Activated CD8-positive, alpha-beta T cell treated with anti-CD3 and anti-CD28 coated beads, Interleukin-2, amount 10 ng/mL, durations not matched to agents 7 days and 5 days (primary cell): ENCODE measurements at regions of chr17 and their contacts with region 1.

Region 1: DNA sequence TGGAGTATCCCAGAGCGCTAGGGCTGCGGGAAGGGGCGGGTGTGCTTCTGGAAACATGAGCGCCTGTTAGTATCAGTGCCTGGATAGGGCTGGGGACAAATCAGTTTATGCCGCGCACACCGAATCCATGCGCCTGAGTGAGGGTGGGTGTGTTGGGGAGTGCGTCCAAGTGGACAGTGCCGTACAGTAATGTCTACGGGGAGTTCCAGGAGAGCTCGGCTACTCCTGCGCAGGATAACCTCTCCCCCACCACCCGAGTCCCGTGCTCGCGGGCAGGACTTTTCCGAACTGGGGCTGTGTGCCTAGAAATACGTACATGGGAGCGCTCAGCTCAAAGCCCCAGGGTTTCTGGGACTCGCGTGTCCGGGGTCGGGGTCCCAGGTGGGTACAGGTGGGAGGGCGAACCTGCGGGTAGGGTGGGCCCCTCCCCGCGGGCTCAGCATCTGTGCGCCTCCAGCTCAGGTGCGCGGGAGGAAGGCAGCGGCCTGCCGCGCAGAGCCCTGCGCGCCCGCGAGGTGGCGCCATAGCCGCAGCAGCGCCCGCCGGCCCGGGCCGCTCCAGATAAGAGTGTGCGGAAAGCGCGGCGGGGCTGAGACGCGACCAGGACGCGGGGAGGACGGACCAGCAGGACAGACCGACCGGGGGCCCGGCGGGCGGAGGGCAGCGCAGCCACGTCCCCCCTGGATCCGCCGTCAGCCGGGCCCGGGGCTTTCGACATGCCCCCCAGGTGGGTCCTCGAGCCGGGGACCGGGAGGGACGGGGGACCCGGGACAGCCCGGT is at the start of gene HIC1:
- DNase-seq: peak; percentile 85
- ATAC-seq: peak; percentile 54
- H3K4me3 Mint-ChIP-seq: peak within 1 kb of the TSS; percentile 78
- H3K27ac Mint-ChIP-seq: peak within 1 kb of the TSS; percentile 82
- H3K4me1 Mint-ChIP-seq: peaks cover 27% of the 10 kb centered on the region
- H3K27me3 Mint-ChIP-seq: peaks cover 14% of the 10 kb centered on the region
- total RNA-seq, gene HIC1: 66.8 to 70.8 TPM

Region 2: DNA sequence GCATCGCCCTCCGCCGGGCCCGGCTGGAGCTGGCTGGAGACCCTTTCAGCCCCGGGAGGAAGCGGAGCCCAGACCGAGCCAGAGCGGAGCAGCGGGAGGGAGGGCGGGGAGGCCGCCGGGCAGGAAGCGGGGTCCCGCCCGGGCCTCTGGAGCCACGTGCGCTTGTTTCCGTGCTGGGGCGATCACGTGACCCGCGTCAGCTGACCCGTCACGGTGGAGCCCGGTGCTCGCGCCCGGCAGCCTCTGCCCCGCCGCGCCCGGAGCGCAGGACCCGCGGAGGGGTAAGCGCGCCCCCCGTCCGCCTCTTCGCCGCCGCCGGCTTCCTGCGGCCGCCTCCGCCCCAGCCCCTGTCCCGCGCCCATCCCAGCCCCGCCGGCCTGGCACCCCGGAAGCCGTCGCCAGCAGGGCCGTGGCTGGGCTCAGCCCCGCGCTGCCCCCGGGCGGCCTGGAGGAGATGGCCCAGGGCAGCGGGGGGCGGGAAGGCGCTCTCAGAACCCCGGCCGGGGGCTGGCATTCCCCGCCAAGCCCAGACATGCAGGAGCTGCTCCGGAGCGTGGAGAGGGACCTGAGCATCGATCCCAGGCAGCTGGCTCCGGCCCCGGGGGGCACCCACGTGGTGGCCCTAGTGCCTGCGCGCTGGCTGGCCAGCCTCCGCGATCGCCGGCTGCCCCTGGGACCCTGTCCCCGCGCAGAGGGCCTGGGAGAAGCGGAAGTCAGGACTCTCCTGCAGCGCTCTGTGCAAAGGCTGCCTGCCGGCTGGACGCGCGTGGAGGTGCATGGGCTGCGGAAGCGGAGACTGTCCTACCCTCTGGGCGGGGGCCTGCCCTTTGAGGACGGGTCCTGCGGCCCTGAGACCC is 330.0 kb before region 1 on chr17 and contains the start of gene WDR81:
- CTCF ChIA-PET with region 1: interaction called, 12 read pairs
- POLR2A ChIA-PET with region 1: no interaction called
- DNase-seq: peak; percentile 94
- ATAC-seq: peak; percentile 79
- H3K4me3 Mint-ChIP-seq: peak within 1 kb of the TSS; percentile 77
- H3K27ac Mint-ChIP-seq: peak within 1 kb of the TSS; percentile 82
- H3K4me1 Mint-ChIP-seq: peaks cover 46% of the 10 kb centered on the region
- H3K27me3 Mint-ChIP-seq: no peaks in the 10 kb centered on the region
- total RNA-seq, gene WDR81: 29.4 to 30.8 TPM

Region 3: GRCh38 chr17:2070241-2071023 is 15.7 kb after region 1 on chr17:
- CTCF ChIA-PET with region 1: interaction called, 26 read pairs
- POLR2A ChIA-PET with region 1: interaction called, 7 read pairs
- DNase-seq: peak; percentile 78
- ATAC-seq: peak; percentile 82
- H3K4me3 Mint-ChIP-seq: peak overlapping the region; percentile 16
- H3K27ac Mint-ChIP-seq: peak overlapping the region; percentile 84
- H3K4me1 Mint-ChIP-seq: peaks cover 67% of the 10 kb centered on the region
- H3K27me3 Mint-ChIP-seq: no peaks in the 10 kb centered on the region

Region 4: GRCh38 chr17:2176499-2177169 is 121.9 kb after region 1 on chr17:
- CTCF ChIA-PET with region 1: no interaction called
- POLR2A ChIA-PET with region 1: no interaction called
- DNase-seq: no peak
- ATAC-seq: no peak
- H3K4me3 Mint-ChIP-seq: no peak overlapping the region
- H3K27ac Mint-ChIP-seq: peak overlapping the region; percentile 67
- H3K4me1 Mint-ChIP-seq: peaks cover 64% of the 10 kb centered on the region
- H3K27me3 Mint-ChIP-seq: no peaks in the 10 kb centered on the region

Region 5: GRCh38 chr17:2202996-2203575 is 148.4 kb after region 1 on chr17:
- CTCF ChIA-PET with region 1: interaction called, 12 read pairs
- POLR2A ChIA-PET with region 1: interaction called, 3 read pairs
- DNase-seq: no peak
- ATAC-seq: peak; percentile 67
- H3K4me3 Mint-ChIP-seq: peak overlapping the region; percentile 66
- H3K27ac Mint-ChIP-seq: peak overlapping the region; percentile 88
- H3K4me1 Mint-ChIP-seq: peaks cover 45% of the 10 kb centered on the region
- H3K27me3 Mint-ChIP-seq: no peaks in the 10 kb centered on the region

Region 6: GRCh38 chr17:2233441-2233947 is 178.8 kb after region 1 on chr17:
- CTCF ChIA-PET with region 1: interaction called, 20 read pairs
- POLR2A ChIA-PET with region 1: no interaction called
- DNase-seq: no peak
- ATAC-seq: no peak
- H3K4me3 Mint-ChIP-seq: no peak overlapping the region
- H3K27ac Mint-ChIP-seq: peak overlapping the region; percentile 69
- H3K4me1 Mint-ChIP-seq: peaks cover 78% of the 10 kb centered on the region
- H3K27me3 Mint-ChIP-seq: no peaks in the 10 kb centered on the region

Region 7: DNA sequence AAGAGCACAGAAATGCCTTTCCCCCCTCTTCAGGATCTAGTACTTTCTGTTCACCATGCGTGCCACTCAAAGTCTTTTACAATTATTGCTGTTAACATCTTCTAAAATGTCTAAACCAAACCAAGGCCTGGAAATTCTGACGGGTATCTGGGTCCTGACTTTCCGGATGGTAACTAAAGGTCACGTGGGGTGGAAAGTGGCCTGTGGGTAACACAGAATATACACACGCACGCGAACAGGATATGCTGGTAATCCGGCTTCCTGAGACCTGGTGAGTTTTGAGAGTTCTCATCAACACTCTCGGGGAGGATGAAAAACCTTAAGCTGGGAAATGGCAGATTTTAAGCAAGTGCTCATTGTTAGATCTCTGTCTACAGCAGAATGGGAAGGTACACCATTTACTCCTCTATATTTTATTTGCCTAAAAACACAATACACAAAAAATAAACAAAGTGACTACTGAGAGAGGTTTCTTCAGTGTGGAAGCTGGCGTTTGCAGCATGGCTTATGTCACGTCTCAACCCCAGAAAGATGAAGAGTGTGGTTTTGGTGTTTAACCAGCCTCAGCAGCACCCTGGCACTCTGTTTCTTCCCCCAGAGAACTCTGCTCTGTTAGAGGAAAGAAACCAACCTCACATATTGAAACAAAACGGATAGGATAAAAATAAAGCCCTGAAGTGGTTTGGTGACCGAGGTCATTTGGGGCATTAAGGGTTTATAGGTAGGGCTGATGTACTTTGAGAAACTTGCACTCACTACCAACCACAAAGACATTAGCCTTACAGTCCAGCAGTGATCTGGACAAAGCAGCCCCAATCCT is 211.6 kb after region 1 on chr17:
- CTCF ChIA-PET with region 1: interaction called, 66 read pairs
- POLR2A ChIA-PET with region 1: interaction called, 6 read pairs
- DNase-seq: peak; percentile 96
- ATAC-seq: peak; percentile 82
- H3K4me3 Mint-ChIP-seq: peak overlapping the region; percentile 74
- H3K27ac Mint-ChIP-seq: peak overlapping the region; percentile 99
- H3K4me1 Mint-ChIP-seq: peaks cover 88% of the 10 kb centered on the region
- H3K27me3 Mint-ChIP-seq: no peaks in the 10 kb centered on the region

Region 8: DNA sequence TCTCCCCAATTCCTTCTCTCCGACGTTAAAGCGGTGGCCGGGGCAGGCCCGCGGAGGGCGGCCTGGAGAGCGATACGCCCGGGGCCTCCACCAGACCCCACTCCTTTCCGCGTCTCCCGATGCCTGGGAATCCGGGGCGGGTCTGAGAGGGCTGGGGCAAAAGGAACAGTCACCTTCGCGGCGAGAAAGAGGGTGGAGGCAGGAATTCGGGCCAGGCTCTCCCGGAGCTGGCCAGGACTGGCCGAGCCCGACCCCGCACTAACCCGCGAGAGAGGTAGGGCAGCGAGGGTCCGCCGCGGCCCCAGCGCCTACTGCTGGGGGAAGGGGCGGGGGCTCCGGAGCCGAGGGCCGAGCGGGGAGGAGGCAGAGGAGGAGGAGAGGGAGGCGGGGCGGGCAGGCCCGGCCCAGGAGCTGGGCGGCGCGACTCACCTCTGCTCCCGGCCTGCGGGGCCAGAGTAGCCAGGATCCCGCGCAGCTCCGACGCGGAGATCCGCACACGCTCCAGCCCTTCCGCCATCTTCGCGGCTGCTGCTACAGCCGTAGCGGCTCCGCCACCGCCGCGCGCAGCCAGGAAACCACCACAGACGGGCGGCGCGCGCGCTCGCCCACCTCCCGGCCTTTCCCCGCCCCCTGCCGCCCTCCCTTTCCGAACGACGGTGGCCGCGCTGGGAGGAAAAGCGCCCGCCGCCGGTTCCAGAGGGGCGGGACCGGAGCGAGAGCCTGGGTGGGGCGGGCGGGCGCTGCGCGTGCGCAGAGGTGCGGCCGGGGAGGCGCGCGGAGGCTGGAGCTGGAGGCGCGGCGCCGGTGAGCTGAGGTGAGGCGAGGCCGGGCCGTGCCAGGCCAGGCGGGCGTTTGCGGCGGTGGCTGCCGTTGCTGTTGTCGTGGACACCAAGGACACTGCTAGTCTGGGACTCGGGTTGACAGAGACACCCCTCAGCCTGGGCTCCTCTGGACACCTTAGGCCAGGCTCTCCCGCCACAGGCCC is 248.8 kb after region 1 on chr17 and contains the starts of genes SMG6 and SRR:
- CTCF ChIA-PET with region 1: interaction called, 13 read pairs
- POLR2A ChIA-PET with region 1: interaction called, 3 read pairs
- DNase-seq: peak; percentile 96
- ATAC-seq: peak; percentile 90
- H3K4me3 Mint-ChIP-seq: peak within 1 kb of the TSS; percentile 95
- H3K27ac Mint-ChIP-seq: peak within 1 kb of the TSS; percentile 83
- H3K4me1 Mint-ChIP-seq: peaks cover 56% of the 10 kb centered on the region
- H3K27me3 Mint-ChIP-seq: no peaks in the 10 kb centered on the region
- total RNA-seq, gene SMG6: 49.8 to 55.9 TPM
- total RNA-seq, gene SRR: 18.7 to 23.1 TPM